ENCODE measurements at regions of chr5 and their contacts with region 1.

Region 1: DNA sequence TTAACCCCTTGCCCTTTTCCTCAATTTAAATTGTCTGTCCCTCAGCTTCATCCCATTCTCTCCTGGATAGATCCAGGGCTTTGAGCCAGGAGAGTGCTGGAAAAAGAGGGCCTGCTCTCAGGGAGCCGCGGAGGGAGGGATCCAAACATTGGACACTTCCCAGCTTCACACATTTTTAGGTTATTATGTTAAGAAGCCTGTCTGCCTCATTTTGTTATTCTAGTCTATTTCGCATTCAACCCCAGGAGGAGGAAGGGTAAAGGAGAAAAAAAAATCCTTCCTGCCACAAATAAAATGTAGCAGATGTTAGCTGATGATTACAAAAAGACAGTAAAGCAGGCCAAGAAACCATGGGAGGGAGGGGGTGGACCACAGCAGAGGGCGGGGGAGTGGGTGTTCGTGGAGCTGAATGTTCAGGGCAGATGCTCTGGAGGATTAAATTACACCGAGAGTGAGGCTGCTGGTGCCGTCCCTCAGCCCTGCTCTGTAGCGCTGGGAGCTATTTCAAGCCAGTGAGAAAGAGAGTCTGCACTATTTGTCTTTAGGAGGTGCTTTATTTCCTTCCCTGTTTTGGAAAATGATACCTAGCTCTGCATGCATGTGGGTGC is 60.6 kb upstream of the ZFR start:
- DNase-seq: peak in 9 of 35 experiments; percentile 2 to 20 (median 10)
- ATAC-seq: peak; percentile 40 to 58 (median 50)
- H3K4me3 ChIP-seq: peak overlapping the region in 1 of 2 donors; percentile 25
- H3K4me3 Mint-ChIP-seq: peak overlapping the region in 2 of 3 donors; percentile 3 to 68
- H3K27ac ChIP-seq: no peak overlapping the region
- H3K27ac Mint-ChIP-seq: peak overlapping the region; percentile 48 to 62
- H3K4me1 ChIP-seq: peaks cover 3 to 13% of the 10 kb centered on the region in 2 experiments
- H3K4me1 Mint-ChIP-seq: peaks cover 16 to 23% (median 18%) of the 10 kb centered on the region in 3 donors
- H3K27me3 ChIP-seq: peaks cover 0 to 3% of the 10 kb centered on the region in 2 experiments
- H3K27me3 Mint-ChIP-seq: peaks cover 0 to 9% of the 10 kb centered on the region in 2 donors

Region 2: GRCh38 chr5:32482193-32482592 is 22.9 kb before region 1 on chr5:
- CTCF ChIA-PET with region 1: interaction called in 1 of 2 experiments, 11 read pairs
- POLR2A ChIA-PET with region 1: no interaction called
- DNase-seq: no peak
- ATAC-seq: no peak
- H3K4me3 ChIP-seq: no peak overlapping the region
- H3K4me3 Mint-ChIP-seq: no peak overlapping the region
- H3K27ac ChIP-seq: no peak overlapping the region
- H3K27ac Mint-ChIP-seq: no peak overlapping the region
- H3K4me1 ChIP-seq: no peaks in the 10 kb centered on the region
- H3K4me1 Mint-ChIP-seq: no peaks in the 10 kb centered on the region
- H3K27me3 ChIP-seq: no peaks in the 10 kb centered on the region
- H3K27me3 Mint-ChIP-seq: no peaks in the 10 kb centered on the region

Measured in T-cell (primary cell).